Panc1 (cell line): ENCODE measurements at regions of chr1 and their contacts with region 1.

Region 1: GRCh38 chr1:44643721-44644334 is 30.5 kb downstream of the TMEM53 start:
- DNase-seq: no peak
- ATAC-seq: no peak
- H3K4me3 ChIP-seq: no peak overlapping the region
- H3K27ac ChIP-seq: no peak overlapping the region
- H3K4me1 ChIP-seq: no peaks in the 10 kb centered on the region; the same call in 1 of the 2 replicates
- H3K27me3 ChIP-seq: no peaks in the 10 kb centered on the region
- CTCF ChIP-seq: no peak

Region 2: DNA sequence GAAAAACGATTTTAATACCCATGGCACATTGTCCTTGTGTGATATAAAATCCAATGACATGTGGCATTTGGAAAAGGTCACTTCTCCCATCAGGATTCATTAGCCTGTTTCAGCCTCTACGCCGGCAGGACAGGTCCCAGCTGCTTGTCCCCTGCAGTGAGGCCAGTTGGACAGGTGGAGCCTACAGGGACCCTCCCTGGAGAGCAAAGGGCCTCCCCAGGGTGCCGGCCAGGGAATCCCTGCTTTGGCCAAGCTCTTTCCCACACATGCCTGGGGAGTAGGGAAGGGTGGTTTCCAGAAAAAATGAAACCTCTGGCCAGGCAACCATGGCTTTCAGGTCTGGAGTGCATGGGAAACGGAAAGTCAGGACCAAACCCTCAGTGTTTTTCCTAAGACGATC is 62.6 kb before region 1 on chr1:
- CTCF ChIA-PET with region 1: no interaction called
- POLR2A ChIA-PET with region 1: no interaction called
- in situ Hi-C with region 1: no loop called
- intact Hi-C with region 1: no loop called
- DNase-seq: no peak
- ATAC-seq: no peak
- H3K4me3 ChIP-seq: no peak overlapping the region
- H3K27ac ChIP-seq: no peak overlapping the region
- H3K4me1 ChIP-seq: peaks cover 6% of the 10 kb centered on the region
- H3K27me3 ChIP-seq: no peaks in the 10 kb centered on the region
- CTCF ChIP-seq: no peak

Region 3: GRCh38 chr1:44609412-44609767 is 34.4 kb before region 1 on chr1:
- CTCF ChIA-PET with region 1: no interaction called
- POLR2A ChIA-PET with region 1: no interaction called
- in situ Hi-C with region 1: no loop called
- intact Hi-C with region 1: no loop called
- DNase-seq: no peak
- ATAC-seq: peak; percentile 70; the same call in 1 of the 2 replicates
- H3K4me3 ChIP-seq: no peak overlapping the region
- H3K27ac ChIP-seq: no peak overlapping the region
- H3K4me1 ChIP-seq: no peaks in the 10 kb centered on the region
- H3K27me3 ChIP-seq: no peaks in the 10 kb centered on the region
- CTCF ChIP-seq: no peak; the same call in 1 of the 2 replicates

Region 4: GRCh38 chr1:44631647-44632539 is 11.9 kb before region 1 on chr1:
- CTCF ChIA-PET with region 1: no interaction called
- POLR2A ChIA-PET with region 1: interaction called, 10 read pairs
- in situ Hi-C with region 1: no loop called
- intact Hi-C with region 1: no loop called
- DNase-seq: no peak
- ATAC-seq: peak; percentile 89
- H3K4me3 ChIP-seq: peak overlapping the region; percentile 48 to 88
- H3K27ac ChIP-seq: peak overlapping the region; percentile 96
- H3K4me1 ChIP-seq: peaks cover 6% of the 10 kb centered on the region
- H3K27me3 ChIP-seq: no peaks in the 10 kb centered on the region
- CTCF ChIP-seq: no peak

Region 5: GRCh38 chr1:44740179-44740617 is 96.4 kb after region 1 on chr1:
- CTCF ChIA-PET with region 1: no interaction called
- POLR2A ChIA-PET with region 1: no interaction called
- in situ Hi-C with region 1: no loop called
- intact Hi-C with region 1: no loop called
- DNase-seq: no peak
- ATAC-seq: no peak; the same call in none of the 2 replicates
- H3K4me3 ChIP-seq: peak overlapping the region; percentile 80 to 93
- H3K27ac ChIP-seq: peak overlapping the region; percentile 95
- H3K4me1 ChIP-seq: peaks cover 7% of the 10 kb centered on the region; the same call in 1 of the 2 replicates
- H3K27me3 ChIP-seq: no peaks in the 10 kb centered on the region
- CTCF ChIP-seq: no peak